WTC11 (cell line): ENCODE measurements at regions of chr2 and their contacts with region 1.

Region 1: GRCh38 chr2:31333527-31334183 is 80.9 kb downstream of the XDH start:
- DNase-seq: peak; percentile 93
- ATAC-seq: peak; percentile 93
- H3K4me3 Mint-ChIP-seq: no peak overlapping the region
- H3K27ac Mint-ChIP-seq: peak overlapping the region; percentile 87; the same call in 1 of the 2 replicates
- H3K4me1 Mint-ChIP-seq: peaks cover 26% of the 10 kb centered on the region
- H3K27me3 Mint-ChIP-seq: no peaks in the 10 kb centered on the region
- CTCF ChIP-seq: peak; percentile 87

Region 2: GRCh38 chr2:31089645-31090044 is 244.0 kb before region 1 on chr2:
- CTCF ChIA-PET with region 1: interaction called, 11 read pairs
- POLR2A ChIA-PET with region 1: no interaction called
- DNase-seq: no peak
- ATAC-seq: peak; percentile 51; the same call in 1 of the 2 replicates
- H3K4me3 Mint-ChIP-seq: no peak overlapping the region
- H3K27ac Mint-ChIP-seq: no peak overlapping the region
- H3K4me1 Mint-ChIP-seq: no peaks in the 10 kb centered on the region
- H3K27me3 Mint-ChIP-seq: no peaks in the 10 kb centered on the region; the same call in 1 of the 2 replicates
- CTCF ChIP-seq: no peak

Region 3: DNA sequence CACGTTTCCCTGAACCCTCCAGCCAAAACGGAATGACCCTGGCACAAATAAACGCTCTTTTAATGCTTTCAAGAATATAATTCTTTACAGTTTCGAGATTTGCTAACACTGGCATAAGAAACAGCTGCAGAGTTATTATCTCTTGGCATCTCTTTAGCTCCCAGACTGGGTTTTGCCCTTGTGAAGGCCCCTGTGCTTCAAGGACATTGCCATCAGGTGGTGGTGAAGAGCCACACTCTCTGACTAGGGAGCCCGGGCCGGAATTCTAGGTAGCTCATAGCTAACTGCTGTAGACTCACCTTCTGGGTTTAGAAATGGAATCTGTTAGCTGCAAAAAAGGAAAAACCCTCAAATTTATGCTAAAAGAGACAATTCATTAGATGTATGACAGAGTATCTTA is 182.2 kb before region 1 on chr2:
- CTCF ChIA-PET with region 1: interaction called, 18 read pairs
- POLR2A ChIA-PET with region 1: no interaction called
- DNase-seq: peak; percentile 22
- ATAC-seq: peak; percentile 75
- H3K4me3 Mint-ChIP-seq: no peak overlapping the region
- H3K27ac Mint-ChIP-seq: no peak overlapping the region
- H3K4me1 Mint-ChIP-seq: no peaks in the 10 kb centered on the region
- H3K27me3 Mint-ChIP-seq: no peaks in the 10 kb centered on the region; the same call in 1 of the 2 replicates
- CTCF ChIP-seq: no peak

Region 4: DNA sequence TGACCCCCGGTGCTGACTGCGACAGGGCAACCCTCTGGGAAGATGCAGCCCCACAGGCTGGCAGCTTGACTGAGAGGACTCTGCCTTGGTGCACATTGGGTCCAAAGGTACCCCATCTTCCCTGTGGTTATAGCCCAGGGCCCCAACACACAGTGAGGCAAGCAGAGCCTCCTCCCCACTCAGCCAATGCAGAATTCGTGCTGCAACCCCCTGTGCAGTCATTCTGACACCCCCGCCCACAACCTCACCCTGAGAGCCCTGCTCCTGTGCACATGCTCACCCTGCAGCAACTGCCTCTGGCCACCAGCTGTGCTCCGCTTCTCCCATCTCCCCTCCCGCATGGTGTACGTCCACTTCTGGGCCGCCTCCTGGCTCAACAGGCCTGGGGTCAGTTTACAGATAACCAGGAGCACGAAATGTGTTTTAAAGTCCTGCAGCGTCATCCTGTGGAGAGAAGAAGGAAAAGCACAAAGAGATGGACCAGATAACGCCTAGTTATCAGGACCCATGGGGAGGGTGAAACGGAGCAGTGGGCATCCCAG is 140.7 kb before region 1 on chr2:
- CTCF ChIA-PET with region 1: interaction called, 11 read pairs
- POLR2A ChIA-PET with region 1: no interaction called
- DNase-seq: peak; percentile 21
- ATAC-seq: peak; percentile 79
- H3K4me3 Mint-ChIP-seq: no peak overlapping the region
- H3K27ac Mint-ChIP-seq: no peak overlapping the region
- H3K4me1 Mint-ChIP-seq: peaks cover 11% of the 10 kb centered on the region
- H3K27me3 Mint-ChIP-seq: peaks cover 4% of the 10 kb centered on the region; the same call in 1 of the 2 replicates
- CTCF ChIP-seq: no peak

Region 5: DNA sequence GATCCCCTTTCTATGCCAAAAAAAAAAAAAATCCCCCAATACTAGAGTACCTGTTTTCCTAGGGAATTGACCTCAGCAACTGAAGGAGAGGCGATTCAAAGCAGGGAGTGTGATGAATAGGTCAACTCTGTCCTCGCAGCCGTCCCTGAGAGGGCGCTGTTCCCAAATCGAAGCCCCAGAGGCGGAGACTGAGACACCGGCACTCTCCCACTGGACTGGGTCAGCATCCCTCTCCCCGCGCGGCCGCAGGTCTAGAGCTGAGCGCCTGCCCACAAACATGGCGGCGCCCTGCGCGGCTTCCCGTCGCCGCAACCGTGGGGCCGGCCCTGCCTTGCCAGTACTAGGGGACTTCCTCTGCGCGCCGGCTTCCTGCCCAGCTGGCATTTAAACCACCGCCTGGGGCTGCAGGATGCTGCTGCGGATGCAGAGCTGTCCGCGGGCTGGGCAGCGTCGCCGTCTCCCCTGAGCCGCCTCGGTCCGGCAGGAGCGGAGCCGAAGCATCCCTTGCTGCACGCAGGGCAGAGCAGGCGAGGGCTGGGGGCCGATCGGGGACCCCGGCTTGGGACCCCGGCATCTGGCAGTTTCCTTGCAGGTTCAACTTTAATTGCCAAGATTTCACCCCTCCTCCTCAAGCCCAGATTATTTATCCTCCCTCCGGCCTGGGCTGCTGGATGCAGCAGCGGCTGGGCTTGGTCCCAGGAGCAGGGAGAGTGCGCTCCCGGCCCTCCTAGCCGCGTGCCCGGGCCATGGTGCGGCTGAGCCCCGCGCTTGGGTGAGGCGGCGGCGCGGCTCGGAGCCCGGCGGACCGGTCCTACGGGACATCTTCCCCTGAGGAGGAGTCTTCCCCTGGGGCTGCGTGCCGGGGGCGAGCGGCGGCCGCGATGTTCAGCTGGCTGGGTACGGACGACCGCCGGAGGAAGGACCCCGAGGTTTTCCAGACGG is 99.6 kb before region 1 on chr2 and contains the start of gene EHD3:
- CTCF ChIA-PET with region 1: interaction called, 46 read pairs
- POLR2A ChIA-PET with region 1: interaction called, 3 read pairs
- DNase-seq: peak; percentile 97
- ATAC-seq: peak; percentile 98
- H3K4me3 Mint-ChIP-seq: peak within 1 kb of the TSS; percentile 74
- H3K27ac Mint-ChIP-seq: no peak within 1 kb of the TSS
- H3K4me1 Mint-ChIP-seq: peaks cover 20% of the 10 kb centered on the region
- H3K27me3 Mint-ChIP-seq: peaks cover 11% of the 10 kb centered on the region
- CTCF ChIP-seq: peak; percentile 57; the same call in 1 of the 2 replicates
- total RNA-seq, gene EHD3: 9.8 to 10.2 TPM (median 10.0 TPM) in 3 replicates